Head of caudate nucleus (tissue), 42 donors: ENCODE measurements at regions of chr1 and their contacts with region 1.

Region 1: DNA sequence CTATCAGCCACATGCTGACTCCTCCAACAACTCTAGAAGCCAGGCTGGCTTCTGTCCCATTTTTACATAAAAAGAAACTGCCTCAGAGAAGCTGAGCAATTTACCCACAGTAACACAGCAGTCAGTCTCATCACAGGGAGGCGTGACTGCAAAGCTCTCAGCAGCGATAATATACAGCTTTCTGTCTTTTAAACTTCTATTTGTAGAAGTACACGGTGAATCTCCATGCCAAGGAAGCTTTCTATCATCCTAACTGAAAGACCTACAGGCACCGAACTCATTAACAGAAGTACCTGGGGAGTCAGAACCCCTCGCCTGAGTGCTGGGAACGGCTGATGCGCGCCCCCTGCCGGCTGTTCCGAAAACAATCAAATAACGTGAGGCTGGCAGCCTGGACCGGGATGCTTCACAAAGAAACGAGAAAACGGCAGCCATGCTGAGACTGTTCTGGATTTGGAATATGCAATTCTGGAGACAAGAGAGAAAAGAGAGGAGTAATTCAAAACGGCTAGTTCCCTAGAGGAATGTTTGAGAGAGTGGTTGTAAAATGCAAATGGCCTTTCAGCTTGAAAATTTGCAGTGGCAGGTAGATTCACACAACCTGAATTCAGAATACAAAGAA is 43.5 kb upstream of the RAB4A start:
- DNase-seq: peak; percentile 78 to 97 (median 92)

Region 2: GRCh38 chr1:228734881-228735801 is 492.3 kb before region 1 on chr1 and contains the start of gene RHOU:
- intact Hi-C with region 1: loop called (anchors 2 kb)
- DNase-seq: peak; percentile 40 to 93 (median 86)

Region 3: GRCh38 chr1:229130028-229130668 is 97.3 kb before region 1 on chr1:
- intact Hi-C with region 1: loop called (anchors 10 kb)
- DNase-seq: peak in 5 of 42 donors; percentile 16 to 33 (median 19)